IMR-90 (cell line): ENCODE measurements at regions of chr9 and their contacts with region 1.

Region 1: DNA sequence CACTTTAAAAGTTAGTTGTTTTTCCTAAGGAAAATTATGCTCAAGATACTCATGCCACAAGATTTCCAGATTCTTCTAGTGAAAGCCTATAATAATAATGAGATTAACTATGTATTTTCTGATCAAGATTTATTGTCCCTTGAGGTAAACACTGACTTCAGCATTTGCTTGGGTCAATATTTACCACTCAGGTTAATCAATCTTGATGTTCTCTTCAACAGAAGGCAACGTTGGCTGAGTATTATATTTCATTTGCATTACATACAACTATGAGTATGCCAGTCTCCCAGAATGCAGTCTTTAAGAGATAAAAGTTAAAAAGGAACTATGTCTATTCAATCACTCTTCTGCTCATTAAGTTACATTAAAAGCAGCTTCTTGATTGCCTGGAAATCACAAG is 115.6 kb downstream of the GPR21 start:
- DNase-seq: no peak
- ATAC-seq: no peak
- H3K4me3 ChIP-seq: no peak overlapping the region
- H3K27ac ChIP-seq: no peak overlapping the region
- H3K4me1 ChIP-seq: no peaks in the 10 kb centered on the region
- H3K27me3 ChIP-seq: no peaks in the 10 kb centered on the region
- CTCF ChIP-seq: no peak
- POLR2A ChIP-seq: no peak
- RAD21 ChIP-seq: no peak

Region 2: GRCh38 chr9:122656378-122656777 is 492.7 kb before region 1 on chr9:
- CTCF ChIA-PET with region 1: no interaction called
- POLR2A ChIA-PET with region 1: no interaction called
- dilution Hi-C with region 1: no loop called
- in situ Hi-C with region 1: no loop called
- intact Hi-C with region 1: no loop called
- DNase-seq: no peak
- ATAC-seq: no peak
- H3K4me3 ChIP-seq: no peak overlapping the region
- H3K27ac ChIP-seq: no peak overlapping the region
- H3K4me1 ChIP-seq: no peaks in the 10 kb centered on the region
- H3K27me3 ChIP-seq: no peaks in the 10 kb centered on the region
- CTCF ChIP-seq: no peak
- POLR2A ChIP-seq: no peak
- RAD21 ChIP-seq: no peak

Region 3: DNA sequence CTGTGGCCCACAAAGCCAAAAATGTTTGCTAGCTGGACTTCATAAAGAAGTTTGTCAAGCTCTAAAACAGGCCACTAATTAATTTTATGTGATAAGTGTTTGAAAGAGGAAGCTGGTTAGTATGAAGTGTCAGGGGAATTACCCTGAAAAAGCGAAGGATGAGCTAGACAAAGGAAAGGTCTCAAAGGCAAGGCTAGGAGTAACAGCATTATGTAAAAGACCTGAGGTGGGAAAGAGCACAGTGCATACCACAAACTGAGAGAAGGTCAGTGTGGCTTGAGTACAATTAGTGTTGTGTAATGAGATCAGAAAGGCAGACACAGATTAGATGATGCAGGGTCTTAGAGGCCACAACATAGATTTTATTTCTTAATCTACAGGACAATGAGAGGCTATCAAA is 273.5 kb before region 1 on chr9:
- CTCF ChIA-PET with region 1: no interaction called
- POLR2A ChIA-PET with region 1: no interaction called
- dilution Hi-C with region 1: no loop called
- in situ Hi-C with region 1: no loop called
- intact Hi-C with region 1: no loop called
- DNase-seq: no peak
- ATAC-seq: no peak
- H3K4me3 ChIP-seq: no peak overlapping the region
- H3K27ac ChIP-seq: no peak overlapping the region
- H3K4me1 ChIP-seq: no peaks in the 10 kb centered on the region
- H3K27me3 ChIP-seq: no peaks in the 10 kb centered on the region
- CTCF ChIP-seq: no peak
- POLR2A ChIP-seq: no peak
- RAD21 ChIP-seq: no peak

Region 4: GRCh38 chr9:123211081-123211480 is 62.0 kb after region 1 on chr9:
- CTCF ChIA-PET with region 1: no interaction called
- POLR2A ChIA-PET with region 1: no interaction called
- dilution Hi-C with region 1: no loop called
- in situ Hi-C with region 1: no loop called
- intact Hi-C with region 1: loop called (anchors 5 kb)
- DNase-seq: no peak
- ATAC-seq: no peak
- H3K4me3 ChIP-seq: no peak overlapping the region
- H3K27ac ChIP-seq: no peak overlapping the region
- H3K4me1 ChIP-seq: peaks cover 2% of the 10 kb centered on the region; the same call in 1 of the 2 replicates
- H3K27me3 ChIP-seq: no peaks in the 10 kb centered on the region; the same call in 1 of the 2 replicates
- CTCF ChIP-seq: no peak
- POLR2A ChIP-seq: no peak
- RAD21 ChIP-seq: no peak